ENCODE measurements at regions of chr6 and their contacts with region 1.

Region 1: DNA sequence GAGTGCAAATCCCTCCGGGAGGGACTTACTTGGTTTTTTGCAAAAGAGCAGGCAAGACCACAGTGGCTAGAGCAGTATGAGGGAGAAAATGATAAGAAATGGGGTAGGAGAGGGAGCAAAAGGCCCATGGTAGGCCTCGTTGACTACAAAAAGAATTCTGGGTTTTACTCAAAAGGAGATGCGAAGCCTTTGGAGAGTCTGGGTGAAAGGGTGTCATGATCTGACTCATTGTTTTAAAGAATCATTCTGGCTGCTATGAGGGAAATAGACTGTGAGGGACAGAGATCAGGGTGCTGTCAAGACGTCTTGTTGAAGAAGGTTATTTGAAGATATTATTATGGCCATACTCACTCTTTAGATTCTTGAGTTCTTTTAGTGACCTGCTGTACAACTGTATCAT is 13.0 kb downstream of the TBC1D32 start:
- DNase-seq: no peak
- H3K4me3 ChIP-seq: no peak overlapping the region
- H3K27ac ChIP-seq: no peak overlapping the region
- H3K4me1 ChIP-seq: no peaks in the 10 kb centered on the region
- H3K27me3 ChIP-seq: no peaks in the 10 kb centered on the region
- CTCF ChIP-seq: no peak

Region 2: GRCh38 chr6:120671519-120671918 is 649.8 kb before region 1 on chr6:
- CTCF ChIA-PET with region 1: no interaction called
- POLR2A ChIA-PET with region 1: interaction called, 17 read pairs
- intact Hi-C with region 1: no loop called
- DNase-seq: no peak
- H3K4me3 ChIP-seq: no peak overlapping the region
- H3K27ac ChIP-seq: no peak overlapping the region
- H3K4me1 ChIP-seq: no peaks in the 10 kb centered on the region
- H3K27me3 ChIP-seq: no peaks in the 10 kb centered on the region
- CTCF ChIP-seq: no peak

Region 3: DNA sequence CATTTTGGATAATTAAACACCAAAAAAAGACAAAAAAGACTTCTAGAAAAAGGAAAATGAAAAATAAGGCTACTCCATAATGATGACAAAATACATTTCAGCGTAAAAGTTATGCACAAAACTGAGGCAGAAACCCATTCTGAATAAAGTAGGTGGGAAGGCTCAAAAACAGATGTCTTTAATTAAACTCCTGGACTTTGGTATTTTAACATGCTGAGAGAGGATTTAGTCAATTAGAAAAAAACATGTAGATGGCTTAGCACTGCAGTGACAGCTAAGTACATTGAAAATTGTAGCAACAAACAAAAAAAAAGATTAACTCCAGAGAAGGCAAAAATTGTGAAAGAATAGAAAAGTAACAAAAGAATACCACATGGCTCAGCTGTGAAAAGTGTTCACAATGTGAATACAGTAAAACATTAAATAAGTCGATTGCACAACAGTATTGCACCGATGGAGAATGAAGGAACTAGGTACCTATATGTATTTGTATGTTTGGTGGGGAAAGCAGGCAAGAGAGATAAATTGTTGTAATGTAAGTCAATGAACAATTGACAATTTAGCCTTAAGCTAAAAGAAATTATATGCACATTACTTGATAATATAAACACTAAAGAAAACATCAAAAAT is 46.5 kb before region 1 on chr6:
- CTCF ChIA-PET with region 1: no interaction called
- POLR2A ChIA-PET with region 1: no interaction called
- intact Hi-C with region 1: no loop called
- DNase-seq: peak; percentile 69
- H3K4me3 ChIP-seq: no peak overlapping the region
- H3K27ac ChIP-seq: no peak overlapping the region
- H3K4me1 ChIP-seq: peaks cover 20% of the 10 kb centered on the region
- H3K27me3 ChIP-seq: no peaks in the 10 kb centered on the region
- CTCF ChIP-seq: no peak

Region 4: DNA sequence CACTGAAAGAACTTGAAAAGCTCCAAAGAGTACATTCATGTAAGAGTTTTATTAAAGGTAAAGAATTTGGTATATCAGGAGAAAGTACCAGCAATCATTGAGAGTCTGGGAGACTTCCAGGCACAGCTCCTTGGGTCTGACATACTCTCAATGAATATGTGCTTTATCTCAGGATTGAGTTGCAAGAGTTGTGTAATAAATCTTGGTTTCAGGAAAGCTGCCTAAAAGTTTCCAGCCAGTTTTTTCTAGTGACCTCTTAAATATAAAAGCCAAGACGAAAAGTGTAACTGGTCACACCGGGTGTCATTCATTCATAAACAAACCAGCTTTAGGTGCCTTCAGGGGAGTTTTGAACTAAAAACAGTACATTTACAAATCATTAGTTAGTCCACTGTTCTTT is 92.6 kb after region 1 on chr6:
- CTCF ChIA-PET with region 1: no interaction called
- POLR2A ChIA-PET with region 1: no interaction called
- intact Hi-C with region 1: no loop called
- DNase-seq: no peak
- H3K4me3 ChIP-seq: no peak overlapping the region
- H3K27ac ChIP-seq: no peak overlapping the region
- H3K4me1 ChIP-seq: no peaks in the 10 kb centered on the region
- H3K27me3 ChIP-seq: no peaks in the 10 kb centered on the region
- CTCF ChIP-seq: no peak

Measured in A673 (cell line).